Mammary epithelial cell (primary cell): ENCODE measurements at regions of chr2 and their contacts with region 1.

Region 1: GRCh38 chr2:17309741-17310339 is 208.4 kb downstream of the RAD51AP2 start:
- DNase-seq: peak; percentile 55
- H3K4me3 ChIP-seq: no peak overlapping the region
- H3K27ac ChIP-seq: no peak overlapping the region
- H3K4me1 ChIP-seq: no peaks in the 10 kb centered on the region
- H3K27me3 ChIP-seq: no peaks in the 10 kb centered on the region
- CTCF ChIP-seq: peak; percentile 70 to 91

Region 2: GRCh38 chr2:16608661-16609643 is 700.9 kb before region 1 on chr2:
- CTCF ChIA-PET with region 1: no interaction called
- dilution Hi-C with region 1: no loop called
- in situ Hi-C with region 1: no loop called
- intact Hi-C with region 1: loop called (anchors 5 kb)
- DNase-seq: peak; percentile 61
- H3K4me3 ChIP-seq: peak overlapping the region; percentile 16 to 40 (median 26)
- H3K27ac ChIP-seq: no peak overlapping the region
- H3K4me1 ChIP-seq: peaks cover 3% of the 10 kb centered on the region
- H3K27me3 ChIP-seq: no peaks in the 10 kb centered on the region
- CTCF ChIP-seq: peak; percentile 95 to 97

Region 3: GRCh38 chr2:16899958-16900357 is 409.9 kb before region 1 on chr2:
- CTCF ChIA-PET with region 1: no interaction called
- dilution Hi-C with region 1: no loop called
- in situ Hi-C with region 1: no loop called
- intact Hi-C with region 1: loop called (anchors 5 kb)
- DNase-seq: no peak
- H3K4me3 ChIP-seq: no peak overlapping the region
- H3K27ac ChIP-seq: no peak overlapping the region
- H3K4me1 ChIP-seq: no peaks in the 10 kb centered on the region
- H3K27me3 ChIP-seq: peaks cover 3% of the 10 kb centered on the region
- CTCF ChIP-seq: no peak

Region 4: GRCh38 chr2:17171446-17172049 is 138.3 kb before region 1 on chr2:
- CTCF ChIA-PET with region 1: no interaction called
- dilution Hi-C with region 1: no loop called
- in situ Hi-C with region 1: no loop called
- intact Hi-C with region 1: loop called (anchors 1 kb)
- DNase-seq: peak; percentile 40
- H3K4me3 ChIP-seq: no peak overlapping the region
- H3K27ac ChIP-seq: no peak overlapping the region
- H3K4me1 ChIP-seq: no peaks in the 10 kb centered on the region
- H3K27me3 ChIP-seq: no peaks in the 10 kb centered on the region
- CTCF ChIP-seq: peak; percentile 67 to 83

Region 5: GRCh38 chr2:17479875-17480274 is 170.0 kb after region 1 on chr2:
- CTCF ChIA-PET with region 1: no interaction called
- dilution Hi-C with region 1: no loop called
- in situ Hi-C with region 1: no loop called
- intact Hi-C with region 1: no loop called
- DNase-seq: peak; percentile 59
- H3K4me3 ChIP-seq: no peak overlapping the region
- H3K27ac ChIP-seq: no peak overlapping the region
- H3K4me1 ChIP-seq: peaks cover 33% of the 10 kb centered on the region
- H3K27me3 ChIP-seq: no peaks in the 10 kb centered on the region
- CTCF ChIP-seq: no peak

Region 6: GRCh38 chr2:17672583-17673317 is 362.9 kb after region 1 on chr2:
- CTCF ChIA-PET with region 1: interaction called, 6 read pairs
- dilution Hi-C with region 1: loop called (anchors 25 kb)
- in situ Hi-C with region 1: loop called in 1 of 2 experiments (anchors 25 kb)
- intact Hi-C with region 1: loop called (anchors 5 kb)
- DNase-seq: peak; percentile 80
- H3K4me3 ChIP-seq: no peak overlapping the region
- H3K27ac ChIP-seq: peak overlapping the region; percentile 60
- H3K4me1 ChIP-seq: no peaks in the 10 kb centered on the region
- H3K27me3 ChIP-seq: no peaks in the 10 kb centered on the region
- CTCF ChIP-seq: peak in 1 of 2 donors; percentile 15